ENCODE measurements at regions of chr7 and their contacts with region 1.

Region 1: GRCh38 chr7:26365077-26365900 is 73.6 kb downstream of the SNX10 start:
- DNase-seq: no peak
- H3K4me3 ChIP-seq: no peak overlapping the region
- H3K27ac ChIP-seq: peak overlapping the region in 2 of 8 donors; percentile 38 to 48
- H3K4me1 ChIP-seq: peaks cover 6 to 49% (median 22%) of the 10 kb centered on the region in 6 donors
- H3K27me3 ChIP-seq: no peaks in the 10 kb centered on the region
- CTCF ChIP-seq: peak in 10 of 11 experiments; percentile 42 to 94 (median 78)
- POLR2A ChIP-seq: no peak

Region 2: DNA sequence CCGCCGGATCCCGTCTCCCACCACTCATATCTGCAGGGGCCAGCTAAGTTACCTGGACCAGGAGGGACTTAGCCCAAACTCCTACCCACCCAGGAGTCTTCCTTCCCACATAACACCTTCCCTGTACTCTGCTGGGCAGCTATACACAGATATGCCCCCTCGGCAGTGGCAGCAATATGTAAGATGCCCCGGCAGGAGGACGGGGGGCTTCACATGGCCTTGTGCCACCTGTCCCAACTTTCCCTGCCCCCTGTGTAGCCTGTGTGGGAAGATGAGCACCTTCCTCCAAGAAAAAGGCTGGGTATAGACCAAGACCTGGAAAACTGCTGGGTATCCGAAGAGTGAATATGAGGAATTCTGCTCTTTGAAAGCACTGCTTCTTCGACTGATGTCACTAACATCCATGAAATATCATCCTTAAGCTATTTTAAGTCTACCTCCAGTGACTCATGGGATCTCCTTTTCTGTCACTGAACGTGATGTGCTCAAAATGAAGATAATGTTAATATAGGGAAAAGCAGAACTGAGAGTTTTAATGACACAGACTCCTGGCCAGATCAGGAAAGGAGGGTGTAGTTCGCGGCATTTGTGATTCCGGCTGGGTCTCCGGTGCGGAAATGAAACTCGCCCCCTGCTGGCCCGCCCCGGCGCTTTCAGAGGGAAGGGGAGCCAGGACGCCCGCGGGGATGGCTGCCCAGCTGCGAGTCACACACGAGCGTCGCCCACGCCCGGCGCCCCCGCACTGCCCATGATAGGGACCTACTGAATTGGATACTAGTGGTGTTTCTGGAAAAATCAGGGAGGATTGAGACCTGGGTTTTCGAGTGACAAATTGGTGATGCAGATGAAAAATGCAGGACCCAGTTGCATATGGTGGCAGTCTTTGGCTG is 470.1 kb before region 1 on chr7:
- intact Hi-C with region 1: loop called (anchors 5 kb)
- DNase-seq: peak; percentile 93
- H3K4me3 ChIP-seq: peak overlapping the region in 4 of 8 donors; percentile 1 to 55 (median 14)
- H3K27ac ChIP-seq: peak overlapping the region in 4 of 8 donors; percentile 10 to 69 (median 28)
- H3K4me1 ChIP-seq: peaks cover 9 to 37% (median 28%) of the 10 kb centered on the region in 6 donors
- H3K27me3 ChIP-seq: peaks cover 0 to 83% (median under 1%) of the 10 kb centered on the region in 7 donors
- CTCF ChIP-seq: peak; percentile 47 to 90 (median 77)
- POLR2A ChIP-seq: no peak

Region 3: DNA sequence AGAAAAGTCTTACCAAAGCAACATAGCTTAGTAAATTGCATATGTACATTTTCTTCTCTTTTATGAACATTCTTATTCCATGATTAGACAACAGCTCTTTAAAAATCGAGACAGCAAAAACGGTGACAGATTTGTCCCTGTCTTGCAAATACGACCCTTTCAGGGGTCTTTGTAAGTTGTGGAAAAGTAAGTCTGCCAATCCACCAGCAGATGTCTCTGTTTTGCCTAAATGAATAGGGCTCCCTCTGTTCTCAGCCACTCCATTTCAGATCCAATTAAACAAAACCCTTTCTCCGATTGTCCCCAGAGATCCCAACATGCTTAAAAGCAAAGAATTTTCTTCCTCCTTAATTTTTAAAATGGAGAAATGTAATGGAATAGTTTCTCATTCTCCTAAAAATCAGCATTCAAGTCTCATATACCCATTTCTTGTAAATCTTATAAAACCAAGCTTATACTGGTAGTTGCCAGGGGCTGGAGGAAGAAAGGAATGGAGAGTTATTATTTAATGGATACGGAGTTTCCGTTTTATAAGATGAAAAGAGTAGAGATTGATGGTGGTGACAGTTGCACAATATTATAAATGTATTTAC is 274.3 kb before region 1 on chr7:
- intact Hi-C with region 1: loop called (anchors 5 kb)
- DNase-seq: no peak
- H3K4me3 ChIP-seq: peak overlapping the region in 1 of 8 donors; percentile 21
- H3K27ac ChIP-seq: no peak overlapping the region
- H3K4me1 ChIP-seq: peaks cover 0 to 16% (median 8%) of the 10 kb centered on the region in 6 donors
- H3K27me3 ChIP-seq: no peaks in the 10 kb centered on the region
- CTCF ChIP-seq: peak; percentile 43 to 71 (median 61)
- POLR2A ChIP-seq: no peak

Region 4: GRCh38 chr7:26200444-26201246 is 164.6 kb before region 1 on chr7 and contains the start of gene HNRNPA2B1:
- intact Hi-C with region 1: loop called (anchors 5 kb)
- DNase-seq: peak; percentile 99
- H3K4me3 ChIP-seq: peak within 1 kb of the TSS; percentile 51 to 93 (median 89)
- H3K27ac ChIP-seq: peak within 1 kb of the TSS; percentile 99 to 100 (median 100)
- H3K4me1 ChIP-seq: peaks cover 43 to 69% (median 56%) of the 10 kb centered on the region in 6 donors
- H3K27me3 ChIP-seq: no peaks in the 10 kb centered on the region
- CTCF ChIP-seq: peak in 7 of 11 experiments; percentile 7 to 56 (median 51)
- POLR2A ChIP-seq: peak; percentile 100
- total RNA-seq, gene HNRNPA2B1: 267 to 549 (median 418) TPM

Region 5: DNA sequence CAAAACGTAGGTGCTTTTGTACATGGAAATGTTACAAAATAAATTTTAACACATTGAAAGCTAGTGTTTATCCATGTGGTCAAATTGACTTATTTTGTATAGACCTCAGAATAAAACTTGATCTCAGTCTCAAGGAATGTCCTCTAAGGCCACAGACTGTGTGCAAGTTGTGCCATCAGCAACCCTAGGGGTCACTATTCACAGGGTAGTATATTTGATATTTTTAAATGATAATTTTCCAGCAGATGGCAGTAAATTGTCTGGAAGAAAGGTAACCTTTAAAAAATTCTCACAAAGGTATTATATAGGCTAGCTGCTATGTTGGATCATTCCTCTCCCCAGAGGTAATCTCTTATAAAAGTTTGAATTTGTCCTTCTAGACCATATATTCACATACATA is 86.5 kb before region 1 on chr7:
- intact Hi-C with region 1: loop called (anchors 5 kb)
- DNase-seq: no peak
- H3K4me3 ChIP-seq: no peak overlapping the region
- H3K27ac ChIP-seq: peak overlapping the region in 1 of 8 donors; percentile 45
- H3K4me1 ChIP-seq: peaks cover 0 to 20% (median 7%) of the 10 kb centered on the region in 6 donors
- H3K27me3 ChIP-seq: no peaks in the 10 kb centered on the region
- CTCF ChIP-seq: peak in 8 of 11 experiments; percentile 28 to 55 (median 39)
- POLR2A ChIP-seq: no peak

Region 6: GRCh38 chr7:26479581-26479980 is 114.3 kb after region 1 on chr7:
- intact Hi-C with region 1: no loop called
- DNase-seq: no peak
- H3K4me3 ChIP-seq: no peak overlapping the region
- H3K27ac ChIP-seq: no peak overlapping the region
- H3K4me1 ChIP-seq: no peaks in the 10 kb centered on the region
- H3K27me3 ChIP-seq: no peaks in the 10 kb centered on the region
- CTCF ChIP-seq: no peak
- POLR2A ChIP-seq: no peak

Region 7: GRCh38 chr7:27160546-27161213 is 795.4 kb after region 1 on chr7:
- intact Hi-C with region 1: loop called (anchors 5 kb)
- DNase-seq: peak; percentile 96
- H3K4me3 ChIP-seq: peak overlapping the region; percentile 54 to 87 (median 61)
- H3K27ac ChIP-seq: peak overlapping the region in 7 of 8 donors; percentile 5 to 65 (median 49)
- H3K4me1 ChIP-seq: peaks cover 16 to 96% (median 63%) of the 10 kb centered on the region in 6 donors
- H3K27me3 ChIP-seq: peaks cover 8 to 100% (median 93%) of the 10 kb centered on the region in 7 donors
- CTCF ChIP-seq: peak; percentile 95 to 100 (median 99)
- POLR2A ChIP-seq: no peak

Measured in spleen (tissue), 13 donors.